ENCODE measurements at regions of chr3 and their contacts with region 1.

Region 1: GRCh38 chr3:43162230-43163084 is 56.6 kb upstream of the POMGNT2 start:
- DNase-seq: no peak
- H3K4me3 ChIP-seq: no peak overlapping the region
- H3K27ac ChIP-seq: no peak overlapping the region
- H3K4me1 ChIP-seq: no peaks in the 10 kb centered on the region
- H3K27me3 ChIP-seq: no peaks in the 10 kb centered on the region
- CTCF ChIP-seq: peak; percentile 27

Region 2: DNA sequence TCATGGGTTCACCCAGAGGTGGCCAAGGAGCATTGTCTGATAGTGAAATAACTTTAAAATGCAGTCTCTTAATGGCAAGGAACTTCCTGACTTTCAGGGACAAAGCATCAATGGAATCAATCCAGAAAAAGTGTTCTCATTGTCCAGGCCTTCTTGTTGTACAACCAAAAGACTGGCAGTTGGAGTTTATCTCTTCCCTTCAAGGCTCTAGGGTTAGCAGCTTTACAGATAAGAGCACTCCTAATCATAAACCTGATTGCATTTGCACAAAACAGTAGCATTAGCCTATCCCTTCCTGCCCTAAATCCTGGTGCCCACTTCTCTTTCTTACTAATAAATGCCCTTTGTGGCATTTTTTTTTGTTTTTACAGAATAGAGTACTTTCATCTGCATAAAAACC is 703.3 kb before region 1 on chr3:
- intact Hi-C with region 1: no loop called
- DNase-seq: no peak
- H3K4me3 ChIP-seq: no peak overlapping the region
- H3K27ac ChIP-seq: no peak overlapping the region
- H3K4me1 ChIP-seq: no peaks in the 10 kb centered on the region
- H3K27me3 ChIP-seq: no peaks in the 10 kb centered on the region
- CTCF ChIP-seq: no peak

Region 3: DNA sequence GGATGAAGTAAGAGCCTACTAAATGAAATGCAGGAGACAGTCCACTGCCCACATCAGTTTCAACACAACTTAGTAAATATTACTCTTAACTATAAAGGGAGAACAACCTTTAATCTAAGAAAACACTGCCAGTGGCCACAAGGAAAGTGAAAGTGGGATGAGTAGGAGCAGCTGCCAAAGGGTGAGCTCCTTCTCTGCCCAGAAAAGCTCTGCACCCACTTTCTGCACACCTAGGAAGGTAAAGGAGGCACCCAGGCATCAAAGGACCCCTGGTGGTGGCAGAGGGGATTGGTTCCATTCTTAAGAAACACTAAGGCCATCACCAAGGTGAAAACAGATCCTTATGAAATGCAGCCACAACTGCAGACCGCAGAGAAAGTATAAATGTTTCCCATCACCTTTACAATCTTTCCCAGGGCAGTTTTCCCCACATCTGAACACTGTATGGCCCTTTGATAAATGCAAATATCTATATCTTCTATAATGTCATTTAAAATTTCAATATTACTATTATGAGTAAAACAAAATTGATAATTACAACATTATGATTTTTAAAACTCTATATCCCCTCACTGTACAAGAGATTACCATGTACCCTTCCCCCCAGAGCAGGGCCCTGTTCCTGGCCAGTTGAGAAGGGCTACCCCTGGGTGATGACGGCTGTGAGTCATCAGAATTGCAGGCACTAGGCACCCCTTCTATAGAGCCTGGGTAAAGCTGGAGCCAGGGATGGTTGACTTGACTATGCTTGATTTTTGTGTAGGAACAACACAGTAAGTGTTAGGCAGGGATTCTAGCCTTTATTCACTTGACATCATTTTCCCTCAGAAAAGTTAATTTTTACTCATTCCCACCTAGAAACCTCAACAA is 215.8 kb after region 1 on chr3:
- intact Hi-C with region 1: loop called (anchors 5 kb)
- DNase-seq: peak; percentile 50
- H3K4me3 ChIP-seq: no peak overlapping the region
- H3K27ac ChIP-seq: no peak overlapping the region
- H3K4me1 ChIP-seq: no peaks in the 10 kb centered on the region
- H3K27me3 ChIP-seq: no peaks in the 10 kb centered on the region
- CTCF ChIP-seq: peak; percentile 39

Region 4: GRCh38 chr3:43659250-43659880 is 496.9 kb after region 1 on chr3:
- intact Hi-C with region 1: no loop called
- DNase-seq: peak; percentile 23
- H3K4me3 ChIP-seq: no peak overlapping the region
- H3K27ac ChIP-seq: no peak overlapping the region
- H3K4me1 ChIP-seq: no peaks in the 10 kb centered on the region
- H3K27me3 ChIP-seq: no peaks in the 10 kb centered on the region
- CTCF ChIP-seq: no peak

Measured in colonic mucosa (tissue), 4 donors.